ENCODE measurements at regions of chr18 and their contacts with region 1.

Region 1: GRCh38 chr18:23377669-23378301 is 75.3 kb upstream of the RIOK3 start:
- DNase-seq: peak; percentile 60
- H3K4me3 ChIP-seq: no peak overlapping the region
- CTCF ChIP-seq: no peak

Region 2: GRCh38 chr18:23032030-23032582 is 345.7 kb before region 1 on chr18:
- CTCF ChIA-PET with region 1: interaction called, 58 read pairs
- POLR2A ChIA-PET with region 1: interaction called, 3 read pairs
- DNase-seq: peak; percentile 65
- H3K4me3 ChIP-seq: no peak overlapping the region
- CTCF ChIP-seq: no peak

Region 3: GRCh38 chr18:23077493-23078256 is 300.1 kb before region 1 on chr18:
- CTCF ChIA-PET with region 1: interaction called, 13 read pairs
- POLR2A ChIA-PET with region 1: no interaction called
- DNase-seq: no peak
- H3K4me3 ChIP-seq: no peak overlapping the region
- CTCF ChIP-seq: peak; percentile 28

Region 4: GRCh38 chr18:23166891-23167541 is 210.8 kb before region 1 on chr18:
- CTCF ChIA-PET with region 1: no interaction called
- POLR2A ChIA-PET with region 1: no interaction called
- DNase-seq: no peak
- H3K4me3 ChIP-seq: no peak overlapping the region
- CTCF ChIP-seq: no peak

Region 5: GRCh38 chr18:23225503-23225902 is 152.3 kb before region 1 on chr18:
- CTCF ChIA-PET with region 1: interaction called, 12 read pairs
- POLR2A ChIA-PET with region 1: no interaction called
- DNase-seq: peak; percentile 89
- H3K4me3 ChIP-seq: no peak overlapping the region
- CTCF ChIP-seq: no peak

Region 6: GRCh38 chr18:23302851-23303527 is 74.8 kb before region 1 on chr18:
- CTCF ChIA-PET with region 1: interaction called, 16 read pairs
- POLR2A ChIA-PET with region 1: no interaction called
- DNase-seq: peak; percentile 93
- H3K4me3 ChIP-seq: no peak overlapping the region
- CTCF ChIP-seq: no peak

Region 7: GRCh38 chr18:23401400-23402347 is 23.9 kb after region 1 on chr18:
- CTCF ChIA-PET with region 1: interaction called, 25 read pairs
- POLR2A ChIA-PET with region 1: interaction called, 3 read pairs
- DNase-seq: no peak
- H3K4me3 ChIP-seq: no peak overlapping the region
- CTCF ChIP-seq: no peak

Measured in AG04449 (cell line).